ENCODE measurements at regions of chr6 and their contacts with region 1.

Region 1: GRCh38 chr6:111483736-111484632 is 966 bp upstream of the REV3L start:
- DNase-seq: peak; percentile 98
- H3K4me3 ChIP-seq: peak overlapping the region; percentile 81 to 100 (median 94)
- H3K27ac ChIP-seq: peak overlapping the region; percentile 98 to 100 (median 100)
- H3K4me1 ChIP-seq: peaks cover 22 to 66% (median 54%) of the 10 kb centered on the region in 4 donors
- H3K27me3 ChIP-seq: no peaks in the 10 kb centered on the region
- CTCF ChIP-seq: no peak
- EP300 ChIP-seq: no peak
- POLR2A ChIP-seq: peak; percentile 62

Region 2: DNA sequence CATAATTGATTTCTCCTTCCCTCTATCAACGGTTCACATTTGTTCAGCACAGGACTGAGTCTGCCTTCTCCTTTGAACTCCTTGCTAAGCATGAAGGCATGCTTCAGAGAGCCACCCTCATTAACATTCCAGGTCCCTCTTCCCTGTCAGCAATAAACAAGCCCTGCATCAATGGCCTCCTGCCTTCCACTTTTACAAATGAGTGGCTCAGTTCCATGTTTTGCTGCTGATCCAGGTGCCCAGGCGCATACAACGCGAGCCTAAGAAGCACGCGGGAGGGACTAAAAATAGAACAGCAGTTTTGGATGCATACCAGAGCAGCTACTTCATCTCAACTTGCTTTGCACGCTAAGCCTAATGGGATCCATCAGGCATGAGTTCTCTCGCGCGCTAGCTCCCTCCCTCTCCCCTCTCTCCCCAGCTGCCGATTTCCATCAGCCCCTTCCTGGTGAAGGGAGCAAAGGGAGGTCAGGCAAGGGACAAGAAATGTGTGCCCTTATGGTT is 68.3 kb after region 1 on chr6:
- intact Hi-C with region 1: loop called (anchors 5 kb)
- DNase-seq: peak; percentile 92
- H3K4me3 ChIP-seq: peak overlapping the region; percentile 7 to 26 (median 16)
- H3K27ac ChIP-seq: peak overlapping the region; percentile 76 to 81 (median 78)
- H3K4me1 ChIP-seq: peaks cover 38 to 64% (median 62%) of the 10 kb centered on the region in 4 donors
- H3K27me3 ChIP-seq: no peaks in the 10 kb centered on the region
- CTCF ChIP-seq: no peak
- EP300 ChIP-seq: no peak
- POLR2A ChIP-seq: no peak